ENCODE measurements at regions of chr12 and their contacts with region 1.

Region 1: GRCh38 chr12:120132863-120133385 is 16.4 kb upstream of the RAB35 start:
- DNase-seq: peak; percentile 78
- CTCF ChIP-seq: no peak

Region 2: DNA sequence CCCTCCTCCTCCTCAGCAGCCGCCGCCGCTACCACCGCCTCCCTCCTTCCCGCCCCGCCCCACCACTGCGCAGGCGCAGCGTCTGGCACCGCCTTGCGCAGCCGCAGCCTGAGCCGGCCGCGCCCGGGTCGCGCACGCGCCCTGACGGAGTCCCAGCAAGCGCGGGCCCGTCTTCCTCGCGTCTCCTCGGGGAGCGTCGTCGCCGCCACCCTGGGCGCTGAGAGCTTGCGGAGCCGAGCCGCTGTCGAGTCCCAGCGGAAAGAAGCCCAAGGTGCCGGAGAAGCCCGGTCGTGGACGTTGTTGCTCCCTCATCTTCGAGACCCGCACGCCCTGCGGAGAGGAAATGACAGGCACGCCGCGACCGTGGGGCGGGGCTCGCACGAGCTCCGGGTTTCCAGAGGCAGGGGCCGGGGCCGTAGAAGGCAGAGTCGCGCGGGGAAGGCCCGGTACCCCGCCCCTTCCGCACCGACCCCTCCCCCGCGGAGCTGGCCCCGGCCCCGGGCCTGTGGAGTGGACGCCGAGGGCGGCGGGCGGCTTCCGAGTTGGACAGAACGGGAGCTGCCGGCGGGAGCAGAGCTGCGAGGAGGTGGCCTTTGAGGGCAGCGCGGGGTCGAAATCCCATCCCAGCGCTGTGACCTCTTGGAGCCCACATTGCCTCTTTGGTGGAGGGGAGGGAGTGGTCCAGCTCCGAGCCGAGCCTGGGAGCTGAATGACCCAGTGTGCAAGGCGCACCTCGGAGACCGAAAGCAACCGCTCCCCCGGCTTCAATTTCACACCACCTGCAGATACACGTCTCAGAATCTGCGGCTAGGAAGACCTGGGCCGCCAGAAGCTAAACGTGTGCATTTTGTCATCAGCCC is 15.9 kb before region 1 on chr12:
- CTCF ChIA-PET with region 1: interaction called, 14 read pairs
- POLR2A ChIA-PET with region 1: interaction called, 11 read pairs
- DNase-seq: peak; percentile 96
- CTCF ChIP-seq: no peak